ENCODE measurements at regions of chr15 and their contacts with region 1.

Region 1: GRCh38 chr15:58070801-58071418 is 5.4 kb upstream of the ALDH1A2 start:
- DNase-seq: peak in 1 of 2 experiments; percentile 75
- H3K4me3 ChIP-seq: no peak overlapping the region
- H3K27ac ChIP-seq: no peak overlapping the region
- H3K4me1 ChIP-seq: no peaks in the 10 kb centered on the region
- H3K27me3 ChIP-seq: peaks cover 0 to 20% (median 10%) of the 10 kb centered on the region in 4 experiments; a peak in 6 of 7 replicates
- CTCF ChIP-seq: peak; percentile 69 to 87 (median 78)
- EP300 ChIP-seq: no peak
- POLR2A ChIP-seq: no peak
- RAD21 ChIP-seq: peak; percentile 90 to 92

Region 2: GRCh38 chr15:57743424-57743823 is 327.5 kb before region 1 on chr15:
- CTCF ChIA-PET with region 1: interaction called, 88 read pairs
- POLR2A ChIA-PET with region 1: no interaction called
- DNase-seq: no peak
- H3K4me3 ChIP-seq: no peak overlapping the region
- H3K27ac ChIP-seq: no peak overlapping the region
- H3K4me1 ChIP-seq: peaks cover 0 to 7% (median 6%) of the 10 kb centered on the region in 4 experiments; a peak in 6 of 7 replicates
- H3K27me3 ChIP-seq: no peaks in the 10 kb centered on the region
- CTCF ChIP-seq: peak; percentile 47 to 65 (median 59)
- EP300 ChIP-seq: no peak
- POLR2A ChIP-seq: no peak
- RAD21 ChIP-seq: peak; percentile 66 to 78

Region 3: DNA sequence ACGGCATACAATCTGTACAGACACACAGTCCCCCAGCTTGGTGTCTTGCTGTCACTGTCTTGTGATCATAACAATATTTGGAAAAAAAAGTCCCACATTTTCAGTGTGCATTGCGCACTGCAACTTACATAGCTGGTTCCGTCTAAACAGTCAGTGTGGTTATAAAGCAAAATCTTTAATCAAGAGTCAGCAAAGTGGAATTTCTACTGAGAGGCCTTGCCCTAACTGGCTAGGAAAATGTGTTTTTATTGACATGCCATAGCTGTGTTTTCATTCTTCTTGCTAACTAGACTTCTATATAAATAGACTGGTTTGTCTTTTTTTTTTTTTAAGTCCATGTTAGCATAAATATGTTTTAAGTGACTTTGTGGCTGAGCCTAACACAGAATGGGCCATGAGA is 189.5 kb before region 1 on chr15:
- CTCF ChIA-PET with region 1: interaction called, 11 read pairs
- POLR2A ChIA-PET with region 1: no interaction called
- DNase-seq: no peak
- H3K4me3 ChIP-seq: no peak overlapping the region
- H3K27ac ChIP-seq: no peak overlapping the region
- H3K4me1 ChIP-seq: no peaks in the 10 kb centered on the region
- H3K27me3 ChIP-seq: no peaks in the 10 kb centered on the region
- CTCF ChIP-seq: no peak
- EP300 ChIP-seq: no peak
- POLR2A ChIP-seq: no peak
- RAD21 ChIP-seq: no peak

Region 4: GRCh38 chr15:58043192-58043903 is 27.6 kb before region 1 on chr15:
- CTCF ChIA-PET with region 1: interaction called, 10 read pairs
- POLR2A ChIA-PET with region 1: no interaction called
- DNase-seq: no peak
- H3K4me3 ChIP-seq: no peak overlapping the region
- H3K27ac ChIP-seq: no peak overlapping the region
- H3K4me1 ChIP-seq: 0 out of 7 replicates have a peak, but pooled peaks cover 0 to 2% (median 0%) of the 10 kb centered on the region in 4 experiments
- H3K27me3 ChIP-seq: peaks cover 0 to 5% (median 2%) of the 10 kb centered on the region in 4 experiments; a peak in 4 of 7 replicates
- CTCF ChIP-seq: peak in 2 of 3 experiments; percentile 27 to 58; a peak in 2 of 4 replicates
- EP300 ChIP-seq: no peak
- POLR2A ChIP-seq: no peak
- RAD21 ChIP-seq: peak in 1 of 2 experiments; percentile 32; a peak in 1 of 4 replicates

Region 5: DNA sequence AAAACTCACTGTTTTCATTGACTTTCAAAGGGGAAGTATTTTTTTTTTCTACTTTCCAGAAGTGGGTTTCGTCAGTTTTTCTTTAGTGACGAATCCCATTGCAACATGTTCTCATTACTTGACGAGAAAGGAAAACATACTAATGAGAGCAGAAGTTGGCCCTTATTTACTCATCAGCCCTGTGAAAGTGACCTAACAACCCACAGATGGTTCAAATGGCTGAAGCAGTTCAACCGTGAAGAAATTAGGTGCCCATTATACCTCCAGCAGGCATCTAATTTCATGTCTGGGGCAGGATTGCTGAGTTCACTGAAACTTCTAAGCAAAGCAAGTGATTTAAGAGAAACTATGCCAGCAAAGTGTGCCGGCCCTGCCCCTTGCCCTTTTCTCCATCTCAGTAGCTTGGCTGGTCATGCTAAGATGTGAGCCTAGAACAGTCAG is 76.3 kb after region 1 on chr15:
- CTCF ChIA-PET with region 1: interaction called, 13 read pairs
- POLR2A ChIA-PET with region 1: no interaction called
- DNase-seq: no peak
- H3K4me3 ChIP-seq: no peak overlapping the region
- H3K27ac ChIP-seq: no peak overlapping the region
- H3K4me1 ChIP-seq: no peaks in the 10 kb centered on the region
- H3K27me3 ChIP-seq: no peaks in the 10 kb centered on the region
- CTCF ChIP-seq: no peak
- EP300 ChIP-seq: no peak
- POLR2A ChIP-seq: no peak
- RAD21 ChIP-seq: no peak

Region 6: DNA sequence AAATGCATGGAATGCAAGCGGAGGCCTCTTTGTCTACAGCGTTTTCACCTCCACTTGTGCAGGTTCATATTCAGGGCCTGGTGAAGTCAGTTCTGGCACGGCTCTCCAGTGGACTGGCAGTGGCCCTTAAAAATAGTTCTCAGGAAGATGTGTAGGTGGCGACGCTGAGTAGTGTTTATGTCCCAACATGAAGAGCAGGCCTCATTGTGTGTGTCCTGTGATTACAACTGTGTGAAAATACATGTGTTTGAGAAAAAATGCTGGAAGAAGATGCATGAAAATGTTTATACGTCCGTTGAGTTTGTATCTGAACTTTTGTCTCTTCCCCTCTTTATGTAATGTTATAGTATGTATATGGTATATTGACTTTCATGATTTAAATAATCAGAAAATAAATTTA is 368.0 kb after region 1 on chr15:
- CTCF ChIA-PET with region 1: no interaction called
- POLR2A ChIA-PET with region 1: no interaction called
- DNase-seq: no peak
- H3K4me3 ChIP-seq: no peak overlapping the region
- H3K27ac ChIP-seq: no peak overlapping the region
- H3K4me1 ChIP-seq: peaks cover 8 to 11% (median 10%) of the 10 kb centered on the region in 4 experiments; a peak in 6 of 7 replicates
- H3K27me3 ChIP-seq: no peaks in the 10 kb centered on the region
- CTCF ChIP-seq: peak in 2 of 3 experiments; percentile 26 to 55; a peak in 2 of 4 replicates
- EP300 ChIP-seq: no peak
- POLR2A ChIP-seq: no peak
- RAD21 ChIP-seq: peak; percentile 47 to 61

Measured in H1 (cell line).